ENCODE measurements at regions of chr5 and their contacts with region 1.

Region 1: GRCh38 chr5:10452768-10453331 is 11.2 kb downstream of the ROPN1L start:
- DNase-seq: no peak
- H3K4me3 ChIP-seq: no peak overlapping the region
- H3K27ac ChIP-seq: no peak overlapping the region
- H3K4me1 ChIP-seq: no peaks in the 10 kb centered on the region
- H3K27me3 ChIP-seq: no peaks in the 10 kb centered on the region
- CTCF ChIP-seq: peak; percentile 47

Region 2: GRCh38 chr5:10627160-10627701 is 174.4 kb after region 1 on chr5:
- intact Hi-C with region 1: loop called (anchors 2 kb)
- DNase-seq: no peak
- H3K4me3 ChIP-seq: peak overlapping the region; percentile 35
- H3K27ac ChIP-seq: no peak overlapping the region
- H3K4me1 ChIP-seq: peaks cover 4% of the 10 kb centered on the region
- H3K27me3 ChIP-seq: no peaks in the 10 kb centered on the region
- CTCF ChIP-seq: no peak

Region 3: GRCh38 chr5:10637944-10638343 is 185.1 kb after region 1 on chr5:
- intact Hi-C with region 1: no loop called
- DNase-seq: no peak
- H3K4me3 ChIP-seq: no peak overlapping the region
- H3K27ac ChIP-seq: no peak overlapping the region
- H3K4me1 ChIP-seq: no peaks in the 10 kb centered on the region
- H3K27me3 ChIP-seq: no peaks in the 10 kb centered on the region
- CTCF ChIP-seq: no peak

Region 4: DNA sequence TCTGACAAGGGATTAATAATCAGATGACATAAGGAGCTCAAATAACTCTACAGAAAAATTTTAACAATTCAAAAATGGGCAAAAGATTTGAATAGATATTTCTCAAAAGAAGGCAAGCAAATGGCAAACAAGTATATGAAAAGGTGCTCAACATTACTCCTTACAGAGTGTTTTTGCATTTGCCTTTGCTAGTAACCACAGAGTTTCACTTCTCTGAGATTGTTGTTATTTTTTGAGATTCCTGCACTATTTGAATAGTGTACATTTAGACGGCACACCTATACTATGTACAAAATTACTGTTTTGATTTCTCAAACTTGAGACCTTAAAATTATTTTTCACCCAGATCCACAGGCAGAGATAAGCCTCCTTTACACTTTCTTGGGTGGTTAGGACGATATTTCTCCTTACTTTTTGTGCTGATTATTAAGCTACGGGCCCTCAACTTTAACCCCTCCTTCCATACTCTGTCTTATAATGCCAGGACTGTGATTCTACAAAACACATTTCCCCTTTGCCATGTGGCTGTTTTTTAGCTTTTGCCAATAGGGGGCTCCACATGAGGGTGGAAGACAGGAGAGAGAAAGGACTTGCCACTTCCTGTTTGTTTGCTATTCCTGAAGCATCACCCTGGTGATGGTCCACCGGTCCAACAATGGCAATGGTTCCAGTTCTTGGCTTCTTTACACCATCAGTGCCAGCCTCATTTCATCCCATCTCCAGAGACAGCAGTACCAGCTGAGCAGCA is 373.2 kb after region 1 on chr5:
- intact Hi-C with region 1: no loop called
- DNase-seq: no peak
- H3K4me3 ChIP-seq: no peak overlapping the region
- H3K27ac ChIP-seq: no peak overlapping the region
- H3K4me1 ChIP-seq: no peaks in the 10 kb centered on the region
- H3K27me3 ChIP-seq: no peaks in the 10 kb centered on the region
- CTCF ChIP-seq: no peak